CD4-positive, alpha-beta memory T cell (primary cell): ENCODE measurements at regions of chr19 and their contacts with region 1.

Region 1: GRCh38 chr19:33771384-33772101 is 25.1 kb upstream of the KCTD15 start:
- DNase-seq: peak; percentile 53 to 59 (median 57)
- H3K4me3 ChIP-seq: no peak overlapping the region
- H3K4me3 Mint-ChIP-seq: no peak overlapping the region
- H3K27ac ChIP-seq: no peak overlapping the region
- H3K27ac Mint-ChIP-seq: no peak overlapping the region
- H3K4me1 ChIP-seq: no peaks in the 10 kb centered on the region
- H3K4me1 Mint-ChIP-seq: peaks cover 0 to 6% (median 0%) of the 10 kb centered on the region in 4 donors
- H3K27me3 ChIP-seq: no peaks in the 10 kb centered on the region
- H3K27me3 Mint-ChIP-seq: peaks cover 10 to 21% of the 10 kb centered on the region in 2 donors

Region 2: GRCh38 chr19:33416307-33417215 is 355.0 kb before region 1 on chr19:
- CTCF ChIA-PET with region 1: interaction called, 14 read pairs
- POLR2A ChIA-PET with region 1: no interaction called
- intact Hi-C with region 1: no loop called
- DNase-seq: peak; percentile 48 to 65 (median 60)
- H3K4me3 ChIP-seq: peak overlapping the region in 1 of 2 donors; percentile 8
- H3K4me3 Mint-ChIP-seq: peak overlapping the region in 7 of 8 donors; percentile 19 to 81 (median 62)
- H3K27ac ChIP-seq: no peak overlapping the region
- H3K27ac Mint-ChIP-seq: peak overlapping the region in 1 of 7 donors; percentile 19
- H3K4me1 ChIP-seq: peaks cover 6% of the 10 kb centered on the region
- H3K4me1 Mint-ChIP-seq: peaks cover 2 to 17% (median 5%) of the 10 kb centered on the region in 4 donors
- H3K27me3 ChIP-seq: no peaks in the 10 kb centered on the region
- H3K27me3 Mint-ChIP-seq: no peaks in the 10 kb centered on the region

Region 3: DNA sequence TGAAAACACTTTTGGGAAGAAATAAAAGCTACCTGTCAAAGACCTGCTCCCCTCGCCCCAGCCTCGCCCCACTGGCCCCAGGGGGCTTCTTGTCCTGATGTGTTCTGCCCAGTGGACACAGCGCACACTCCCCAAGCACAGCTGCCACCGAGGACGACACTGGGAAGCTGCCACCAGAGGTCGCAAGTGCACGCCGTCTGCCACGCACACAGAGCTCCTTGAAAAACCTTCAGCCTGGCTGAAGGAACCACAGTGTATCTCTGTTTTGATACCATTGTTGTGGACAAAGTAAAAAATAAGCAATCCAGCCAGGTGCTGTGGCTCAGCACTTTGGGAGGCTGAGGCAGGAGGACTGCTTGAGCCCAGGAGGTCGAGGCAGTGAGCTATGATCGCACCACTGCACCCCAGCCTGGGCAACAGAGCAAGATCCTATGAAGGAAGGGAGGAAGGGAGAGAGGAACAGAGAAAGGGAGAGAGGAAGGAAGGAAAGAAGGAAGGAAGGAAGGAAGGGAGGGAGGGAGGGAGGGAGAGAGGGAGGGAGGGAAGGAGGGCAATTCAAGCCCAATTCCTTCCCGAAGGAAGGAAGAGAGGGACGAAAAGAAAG is 340.8 kb before region 1 on chr19:
- CTCF ChIA-PET with region 1: interaction called, 62 read pairs
- POLR2A ChIA-PET with region 1: no interaction called
- intact Hi-C with region 1: no loop called
- DNase-seq: peak; percentile 52 to 70 (median 57)
- H3K4me3 ChIP-seq: no peak overlapping the region
- H3K4me3 Mint-ChIP-seq: peak overlapping the region; percentile 14 to 81 (median 58)
- H3K27ac ChIP-seq: peak overlapping the region; percentile 11
- H3K27ac Mint-ChIP-seq: peak overlapping the region; percentile 45 to 96 (median 87)
- H3K4me1 ChIP-seq: peaks cover 10% of the 10 kb centered on the region
- H3K4me1 Mint-ChIP-seq: peaks cover 4 to 22% (median 15%) of the 10 kb centered on the region in 4 donors
- H3K27me3 ChIP-seq: no peaks in the 10 kb centered on the region
- H3K27me3 Mint-ChIP-seq: no peaks in the 10 kb centered on the region